ENCODE measurements at regions of chr13 and their contacts with region 1.

Region 1: GRCh38 chr13:29850224-29850898 is at the start of gene UBL3:
- DNase-seq: peak; percentile 72
- H3K4me3 ChIP-seq: peak within 1 kb of the TSS; percentile 84
- CTCF ChIP-seq: no peak

Region 2: GRCh38 chr13:29771247-29771646 is 79.1 kb before region 1 on chr13:
- CTCF ChIA-PET with region 1: interaction called, 25 read pairs
- POLR2A ChIA-PET with region 1: interaction called, 3 read pairs
- DNase-seq: no peak
- H3K4me3 ChIP-seq: no peak overlapping the region
- CTCF ChIP-seq: peak; percentile 4

Region 3: DNA sequence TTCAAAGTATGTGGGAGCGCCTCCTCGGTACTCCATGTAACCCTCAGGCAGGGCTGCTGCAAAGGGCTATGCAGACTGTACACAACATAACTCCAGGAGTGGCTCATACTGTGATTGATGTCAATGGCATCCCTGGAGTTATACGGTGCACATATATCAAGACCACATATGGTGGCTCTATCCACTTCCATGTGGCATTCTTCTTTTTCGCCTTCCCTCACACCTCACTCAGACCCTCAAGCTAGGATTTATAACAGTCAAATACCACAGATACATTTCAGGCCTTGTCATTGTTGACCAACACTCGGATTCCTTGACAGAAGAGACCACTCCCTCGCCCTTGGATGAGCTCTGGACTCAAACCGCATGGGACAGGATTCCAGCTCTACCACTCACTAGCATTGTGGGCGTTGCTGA is 11.3 kb after region 1 on chr13:
- CTCF ChIA-PET with region 1: interaction called, 5 read pairs
- POLR2A ChIA-PET with region 1: interaction called, 25 read pairs
- DNase-seq: peak; percentile 98
- H3K4me3 ChIP-seq: no peak overlapping the region
- CTCF ChIP-seq: no peak

Measured in AG04449 (cell line).